ENCODE measurements at regions of chr10 and their contacts with region 1.

Region 1: GRCh38 chr10:31819391-31819820 is 109.2 kb downstream of the ARHGAP12 start:
- DNase-seq: no peak
- H3K4me3 ChIP-seq: no peak overlapping the region
- H3K27ac ChIP-seq: no peak overlapping the region
- H3K4me1 ChIP-seq: no peaks in the 10 kb centered on the region
- H3K27me3 ChIP-seq: no peaks in the 10 kb centered on the region
- CTCF ChIP-seq: no peak

Region 2: GRCh38 chr10:32015386-32015785 is 196.0 kb after region 1 on chr10:
- CTCF ChIA-PET with region 1: interaction called, 11 read pairs
- POLR2A ChIA-PET with region 1: no interaction called
- intact Hi-C with region 1: no loop called
- DNase-seq: no peak
- H3K4me3 ChIP-seq: no peak overlapping the region
- H3K27ac ChIP-seq: no peak overlapping the region
- H3K4me1 ChIP-seq: no peaks in the 10 kb centered on the region
- H3K27me3 ChIP-seq: no peaks in the 10 kb centered on the region
- CTCF ChIP-seq: no peak

Region 3: GRCh38 chr10:32386623-32387260 is 567.3 kb after region 1 on chr10:
- CTCF ChIA-PET with region 1: no interaction called
- POLR2A ChIA-PET with region 1: interaction called, 20 read pairs
- intact Hi-C with region 1: no loop called
- DNase-seq: peak in 1 of 2 experiments; percentile 36
- H3K4me3 ChIP-seq: no peak overlapping the region
- H3K27ac ChIP-seq: no peak overlapping the region
- H3K4me1 ChIP-seq: no peaks in the 10 kb centered on the region
- H3K27me3 ChIP-seq: no peaks in the 10 kb centered on the region
- CTCF ChIP-seq: no peak

Measured in PC-9 (cell line).